ENCODE measurements at regions of chr6 and their contacts with region 1.

Region 1: DNA sequence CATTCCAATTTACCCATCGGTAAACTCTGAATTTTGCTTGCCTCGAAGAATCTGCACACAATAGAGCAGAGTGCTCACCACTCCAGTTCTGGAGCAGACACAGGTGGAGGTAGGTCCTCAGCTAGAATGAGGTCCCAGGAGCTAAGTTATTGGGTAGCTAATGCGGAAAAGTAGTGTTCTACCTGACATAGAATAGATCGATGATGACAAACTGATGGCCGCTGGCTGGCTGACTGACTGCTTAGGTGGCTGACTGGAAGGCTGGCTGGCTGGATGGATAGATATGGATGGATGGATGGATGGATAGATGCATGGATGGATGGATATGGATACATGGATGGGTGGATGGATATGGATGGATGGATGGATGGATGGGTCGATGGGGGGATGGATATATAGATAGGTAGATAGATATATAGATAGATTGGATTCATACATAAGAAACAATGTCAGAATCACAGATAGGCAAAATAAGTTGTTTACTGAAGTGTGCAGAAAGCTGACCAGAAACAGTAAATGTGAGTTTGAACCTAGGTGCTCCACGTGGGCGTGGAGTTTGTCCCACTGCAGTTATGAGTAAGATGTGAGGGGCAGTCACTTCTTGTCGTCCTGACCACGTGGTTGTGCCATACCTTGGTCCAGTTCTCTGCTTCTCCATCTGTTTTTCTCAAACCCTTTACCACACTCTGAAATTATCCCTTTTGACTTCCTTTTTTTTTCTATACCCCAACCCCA is 62.1 kb downstream of the TBXT start:
- DNase-seq: no peak
- H3K4me3 ChIP-seq: no peak overlapping the region
- H3K27ac ChIP-seq: no peak overlapping the region
- H3K4me1 ChIP-seq: no peaks in the 10 kb centered on the region
- H3K27me3 ChIP-seq: no peaks in the 10 kb centered on the region
- CTCF ChIP-seq: no peak
- POLR2A ChIP-seq: no peak

Region 2: GRCh38 chr6:165884813-165885765 is 220.4 kb before region 1 on chr6:
- intact Hi-C with region 1: loop called (anchors 2 kb)
- DNase-seq: peak; percentile 76 to 81
- H3K4me3 ChIP-seq: no peak overlapping the region
- H3K27ac ChIP-seq: no peak overlapping the region
- H3K4me1 ChIP-seq: no peaks in the 10 kb centered on the region
- H3K27me3 ChIP-seq: no peaks in the 10 kb centered on the region
- CTCF ChIP-seq: peak; percentile 76 to 91 (median 86)
- POLR2A ChIP-seq: no peak